ENCODE measurements at regions of chr2 and their contacts with region 1.

Region 1: DNA sequence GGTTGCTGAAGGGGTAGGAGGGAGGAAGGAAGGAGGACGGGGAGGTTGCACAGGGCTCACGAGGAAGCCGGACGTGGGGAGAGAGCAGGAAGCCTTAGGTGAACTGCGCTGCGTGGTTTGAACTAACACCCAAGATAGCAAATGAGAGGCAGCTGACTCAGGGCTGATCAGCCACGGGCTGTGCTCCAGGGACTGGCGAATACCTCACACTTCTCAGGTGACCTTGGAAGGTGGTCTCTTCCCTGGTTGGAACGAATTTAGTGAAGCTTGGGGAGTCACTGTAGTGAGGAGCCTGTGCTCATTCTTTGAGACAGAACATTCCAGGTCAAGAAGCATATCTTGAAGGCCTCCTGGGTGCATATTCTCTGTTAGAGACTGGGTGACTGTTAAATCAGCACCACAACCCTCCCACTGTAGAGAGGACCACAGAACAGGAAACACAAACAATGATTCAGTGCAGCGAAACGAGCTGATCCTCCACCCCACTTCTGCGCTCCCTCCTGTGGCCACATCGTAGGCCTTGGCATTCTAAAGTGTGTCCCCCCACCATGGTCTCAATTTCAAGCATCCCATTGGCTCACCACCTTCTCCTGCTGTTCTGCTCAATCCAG is 33.8 kb downstream of the TOGARAM2 start:
- DNase-seq: peak; percentile 83
- H3K4me3 Mint-ChIP-seq: peak overlapping the region; percentile 80
- H3K27ac Mint-ChIP-seq: peak overlapping the region; percentile 90
- H3K4me1 Mint-ChIP-seq: peaks cover 76% of the 10 kb centered on the region
- H3K27me3 Mint-ChIP-seq: no peaks in the 10 kb centered on the region

Region 2: GRCh38 chr2:28566521-28567041 is 448.3 kb before region 1 on chr2:
- CTCF ChIA-PET with region 1: interaction called, 4 read pairs
- intact Hi-C with region 1: loop called (anchors 5 kb)
- DNase-seq: peak; percentile 93
- H3K4me3 Mint-ChIP-seq: peak overlapping the region; percentile 83
- H3K27ac Mint-ChIP-seq: peak overlapping the region; percentile 71
- H3K4me1 Mint-ChIP-seq: peaks cover 8% of the 10 kb centered on the region
- H3K27me3 Mint-ChIP-seq: no peaks in the 10 kb centered on the region

Region 3: DNA sequence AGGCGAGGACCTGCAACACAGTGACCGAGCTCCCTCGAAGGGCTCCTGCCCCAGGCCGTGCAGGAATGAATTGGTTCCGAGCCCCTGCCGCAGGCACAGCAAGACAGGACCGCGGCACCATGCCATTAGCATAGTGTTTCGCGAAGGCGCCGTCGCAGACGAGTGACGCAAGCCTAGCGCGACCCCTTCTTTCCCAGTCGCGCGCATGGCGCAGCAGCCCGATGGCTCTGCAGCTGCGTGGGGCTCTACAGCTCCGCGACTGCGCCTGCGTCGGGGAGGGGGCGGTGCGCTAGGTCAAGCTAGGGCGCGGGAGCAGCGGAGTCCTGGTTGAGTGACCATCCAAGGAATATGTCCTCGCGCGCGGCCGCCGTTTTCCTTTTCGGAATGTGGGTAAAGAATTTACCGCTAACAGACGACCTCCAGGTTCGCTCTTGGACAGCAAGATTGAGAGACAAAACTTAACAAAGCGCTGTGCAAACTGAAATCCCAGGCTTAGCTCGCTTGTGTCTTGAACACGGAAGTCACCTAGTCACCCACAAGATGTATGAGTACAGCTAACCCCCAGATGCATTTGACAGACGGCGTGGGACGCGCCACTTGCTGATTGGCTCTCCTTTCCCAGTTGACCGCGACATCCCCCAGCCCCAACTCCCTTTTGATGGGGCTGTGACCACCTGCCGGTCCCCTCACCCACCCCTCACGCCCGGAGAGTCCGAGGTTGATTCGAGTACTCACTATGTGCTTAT is 144.6 kb before region 1 on chr2 and contains the start of gene TRMT61B:
- CTCF ChIA-PET with region 1: no interaction called
- intact Hi-C with region 1: loop called (anchors 1 kb)
- DNase-seq: peak; percentile 97
- H3K4me3 Mint-ChIP-seq: peak within 1 kb of the TSS; percentile 89
- H3K27ac Mint-ChIP-seq: peak within 1 kb of the TSS; percentile 89
- H3K4me1 Mint-ChIP-seq: peaks cover 31% of the 10 kb centered on the region
- H3K27me3 Mint-ChIP-seq: no peaks in the 10 kb centered on the region
- total RNA-seq, gene TRMT61B: 13.6 to 15.5 TPM

Region 4: GRCh38 chr2:28958689-28959088 is 56.2 kb before region 1 on chr2:
- CTCF ChIA-PET with region 1: interaction called, 5 read pairs
- intact Hi-C with region 1: loop called (anchors 1 kb)
- DNase-seq: peak; percentile 39
- H3K4me3 Mint-ChIP-seq: no peak overlapping the region
- H3K27ac Mint-ChIP-seq: no peak overlapping the region
- H3K4me1 Mint-ChIP-seq: no peaks in the 10 kb centered on the region
- H3K27me3 Mint-ChIP-seq: no peaks in the 10 kb centered on the region

Region 5: DNA sequence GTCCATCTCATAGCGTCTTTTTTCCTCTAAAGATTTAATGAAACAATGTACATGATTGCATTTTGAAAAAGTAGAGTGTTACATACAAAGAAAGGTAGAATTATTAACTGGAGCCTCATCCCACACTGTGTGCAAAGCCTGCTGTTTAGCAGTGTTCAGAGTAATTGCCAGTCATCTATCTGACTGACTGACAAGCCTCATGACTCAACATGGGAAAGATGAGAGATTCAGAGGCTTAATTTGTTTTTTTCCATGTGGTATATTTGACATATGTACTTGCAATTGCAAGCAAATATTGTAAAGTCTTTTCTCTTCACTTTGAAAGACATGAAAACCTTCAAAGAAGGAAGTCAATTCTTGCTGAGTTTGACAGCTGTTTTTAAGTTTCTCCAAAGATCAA is 44.7 kb after region 1 on chr2:
- CTCF ChIA-PET with region 1: interaction called, 4 read pairs
- intact Hi-C with region 1: loop called (anchors 2 kb)
- DNase-seq: peak; percentile 23
- H3K4me3 Mint-ChIP-seq: no peak overlapping the region
- H3K27ac Mint-ChIP-seq: peak overlapping the region; percentile 13
- H3K4me1 Mint-ChIP-seq: peaks cover 19% of the 10 kb centered on the region
- H3K27me3 Mint-ChIP-seq: no peaks in the 10 kb centered on the region

Region 6: DNA sequence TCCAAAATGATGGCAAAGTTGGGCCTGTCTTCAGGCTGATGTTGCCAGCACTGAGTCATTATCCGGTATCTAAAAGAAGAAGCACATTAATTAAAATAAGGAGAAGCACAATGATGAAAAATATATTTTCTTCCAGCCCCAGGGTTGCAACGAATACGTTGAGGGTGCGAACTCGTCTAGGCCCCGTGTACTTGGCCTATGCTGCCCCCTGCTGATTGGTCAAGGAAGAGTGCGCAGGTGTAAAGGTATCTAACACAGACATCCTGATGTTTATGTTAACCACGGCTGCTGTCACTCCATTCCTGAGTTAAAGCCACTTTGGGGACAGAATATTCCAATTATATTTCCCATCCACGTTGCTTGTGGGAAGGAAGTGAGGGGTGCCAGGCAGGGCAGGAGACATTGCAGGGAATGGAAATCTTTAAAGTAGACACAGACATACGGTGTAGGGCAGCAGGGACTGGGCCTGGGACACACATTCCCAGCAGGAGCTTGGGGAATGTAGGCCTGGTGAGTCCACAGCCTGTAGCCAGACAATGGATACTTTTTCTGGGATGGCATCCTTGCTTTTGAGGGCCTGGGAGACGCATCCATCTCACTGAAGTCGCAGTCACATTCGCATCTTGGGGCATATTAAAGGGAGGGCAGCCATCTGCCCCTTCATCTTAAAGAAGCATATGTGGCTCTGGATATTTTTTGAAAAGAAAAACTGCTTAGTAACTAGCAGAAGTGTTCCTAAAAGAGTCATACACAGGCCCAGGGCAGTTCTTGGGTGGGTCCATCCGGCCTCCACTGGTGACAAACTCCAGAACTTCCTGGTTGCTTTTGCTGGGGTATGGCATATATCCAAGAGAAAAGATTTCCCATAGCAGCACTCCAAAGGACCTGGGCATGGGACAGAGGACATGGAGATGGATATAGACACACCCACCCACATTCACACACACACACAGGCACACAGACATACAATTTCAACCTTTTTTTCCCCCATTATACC is 182.2 kb after region 1 on chr2:
- CTCF ChIA-PET with region 1: no interaction called
- intact Hi-C with region 1: loop called (anchors 2 kb)
- DNase-seq: peak; percentile 91
- H3K4me3 Mint-ChIP-seq: no peak overlapping the region
- H3K27ac Mint-ChIP-seq: no peak overlapping the region
- H3K4me1 Mint-ChIP-seq: no peaks in the 10 kb centered on the region
- H3K27me3 Mint-ChIP-seq: no peaks in the 10 kb centered on the region

Region 7: DNA sequence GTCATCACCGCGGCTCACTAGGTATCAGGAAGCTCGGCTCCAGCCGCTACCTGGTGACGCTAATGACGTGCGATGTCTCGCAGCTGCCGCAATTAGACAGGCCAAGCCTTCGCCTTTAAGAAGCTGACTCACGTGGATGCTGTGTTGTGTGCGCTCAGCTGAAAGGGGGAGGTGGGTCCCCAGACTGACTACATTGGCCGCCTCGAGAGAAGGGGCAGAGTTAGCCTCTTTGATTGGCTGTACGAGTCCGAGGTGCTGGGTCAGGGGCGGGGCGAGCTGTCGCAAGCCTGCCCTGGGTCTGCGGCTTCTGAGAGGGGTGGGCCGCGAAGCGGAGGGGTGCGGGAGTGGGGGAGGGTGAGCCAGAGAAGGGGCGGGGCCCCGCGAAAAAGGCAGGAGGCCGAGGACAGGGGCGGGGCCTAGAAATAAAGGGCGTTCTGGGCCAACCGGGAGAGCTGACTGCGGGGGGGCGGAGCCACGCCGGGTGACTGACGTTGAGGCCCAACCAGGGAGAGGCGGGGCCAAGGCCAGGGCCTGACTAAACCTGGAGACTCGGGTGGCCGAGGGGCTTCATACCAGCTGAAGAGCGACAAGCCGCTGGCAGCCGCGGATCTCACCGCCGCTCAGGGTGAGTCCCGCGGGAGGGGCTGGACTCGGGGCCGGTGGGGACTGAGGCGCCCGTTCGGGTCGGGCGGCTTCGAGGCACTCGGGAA is 1131.7 kb after region 1 on chr2 and contains the start of gene YPEL5:
- CTCF ChIA-PET with region 1: no interaction called
- intact Hi-C with region 1: loop called (anchors 10 kb)
- DNase-seq: peak; percentile 99
- H3K4me3 Mint-ChIP-seq: peak within 1 kb of the TSS; percentile 84
- H3K27ac Mint-ChIP-seq: peak within 1 kb of the TSS; percentile 95
- H3K4me1 Mint-ChIP-seq: peaks cover 56% of the 10 kb centered on the region
- H3K27me3 Mint-ChIP-seq: no peaks in the 10 kb centered on the region
- total RNA-seq, gene YPEL5: 28.4 to 33.3 TPM